Ascending aorta (tissue), 2 donors: ENCODE measurements at regions of chr7 and their contacts with region 1.

Region 1: DNA sequence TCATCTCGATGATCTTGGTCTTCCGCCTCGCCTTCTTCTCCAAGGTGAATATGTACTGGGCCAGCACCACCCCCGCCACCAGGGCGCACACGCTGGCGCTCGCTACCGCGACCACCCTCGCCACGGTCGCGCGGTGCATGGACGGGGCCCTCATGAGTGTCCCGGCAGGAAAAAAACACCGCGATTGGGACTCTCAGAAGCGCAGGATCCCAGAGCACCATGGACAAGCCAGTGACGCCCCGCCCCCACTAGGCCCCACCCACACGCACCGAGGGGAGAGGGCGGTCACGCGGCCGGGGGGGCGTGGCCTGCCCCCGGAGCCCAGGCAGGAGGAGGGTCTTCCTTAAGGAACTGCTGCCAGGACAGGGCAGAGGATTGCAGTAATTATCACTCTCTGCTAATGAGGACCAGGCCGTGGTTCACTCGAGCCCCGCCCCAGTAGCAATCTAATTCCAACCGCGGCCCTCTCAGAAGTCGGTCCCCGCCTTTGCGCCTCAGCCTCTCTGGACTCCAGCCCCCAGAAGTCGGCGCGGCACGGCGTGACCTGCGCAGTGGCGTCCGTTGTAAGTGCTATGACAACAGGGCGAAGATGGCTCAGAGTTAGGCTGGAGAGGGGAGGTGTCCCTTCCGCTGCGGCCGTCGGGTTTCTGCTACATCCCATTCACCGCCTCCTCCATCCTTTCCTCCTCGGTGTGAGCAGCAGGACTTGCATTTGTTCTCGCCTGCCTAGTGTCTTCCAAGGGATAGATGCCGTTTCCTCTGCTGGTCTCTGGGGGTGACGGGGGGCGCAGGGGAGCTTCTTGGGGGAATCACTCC is at the start of gene BBS9:
- DNase-seq: peak; percentile 73 to 96
- H3K4me3 ChIP-seq: peak within 1 kb of the TSS; percentile 84 to 96
- H3K27ac ChIP-seq: peak within 1 kb of the TSS; percentile 30 to 77
- H3K4me1 ChIP-seq: peaks cover 0 to 8% of the 10 kb centered on the region in 2 donors
- H3K27me3 ChIP-seq: no peaks in the 10 kb centered on the region
- CTCF ChIP-seq: no peak
- total RNA-seq, gene BBS9: 23.3 TPM

Region 2: GRCh38 chr7:32495298-32496176 is 633.7 kb before region 1 on chr7 and contains the start of gene AVL9:
- intact Hi-C with region 1: loop called (anchors 1 kb)
- DNase-seq: peak; percentile 96 to 99
- H3K4me3 ChIP-seq: peak within 1 kb of the TSS; percentile 82 to 97
- H3K27ac ChIP-seq: peak within 1 kb of the TSS; percentile 98 to 99
- H3K4me1 ChIP-seq: peaks cover 7 to 13% of the 10 kb centered on the region in 2 donors
- H3K27me3 ChIP-seq: no peaks in the 10 kb centered on the region
- CTCF ChIP-seq: no peak
- total RNA-seq, gene AVL9: 78.3 TPM

Region 3: DNA sequence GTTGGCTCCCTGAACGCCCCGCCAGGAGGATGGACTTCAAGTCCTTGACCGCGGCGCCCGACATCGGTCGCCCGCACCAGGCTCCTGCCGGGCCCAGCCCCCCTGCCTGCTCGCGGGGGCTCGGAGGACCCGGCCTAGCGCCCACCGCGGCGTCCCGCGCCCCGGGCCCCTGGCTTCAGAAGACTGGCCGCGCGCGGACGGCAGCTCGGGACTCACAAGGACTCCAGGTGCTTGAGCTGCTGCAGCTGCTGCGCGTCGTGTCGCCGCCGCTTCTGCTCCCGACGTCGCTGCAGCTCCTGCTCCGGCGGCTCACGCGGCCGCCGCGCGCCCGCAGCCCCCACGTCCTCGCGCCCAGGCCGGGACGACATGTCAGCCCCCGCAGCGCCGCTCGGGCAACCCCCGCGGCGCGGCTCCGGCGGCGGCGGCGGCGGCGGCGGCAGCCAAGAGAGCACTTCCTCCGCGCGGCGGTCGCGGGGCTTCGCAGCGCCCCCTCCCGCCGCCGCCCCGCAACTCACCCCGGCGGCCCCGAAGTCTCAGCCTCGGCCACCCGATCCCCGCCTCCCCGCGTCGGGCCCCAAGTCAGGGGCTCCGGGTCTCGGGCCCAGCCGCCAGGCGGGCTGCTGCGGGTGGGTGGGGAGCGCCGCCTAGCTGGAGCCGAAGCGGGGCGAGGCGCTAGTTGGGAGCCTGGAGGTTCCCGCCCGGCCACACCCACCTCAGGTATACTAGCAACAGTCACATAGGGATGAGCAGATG is 20.0 kb before region 1 on chr7 and contains the start of gene RP9:
- intact Hi-C with region 1: loop called (anchors 1 kb)
- DNase-seq: peak in 1 of 2 donors; percentile 75
- H3K4me3 ChIP-seq: peak within 1 kb of the TSS; percentile 96 to 100
- H3K27ac ChIP-seq: peak within 1 kb of the TSS in 1 of 2 donors; percentile 81
- H3K4me1 ChIP-seq: peaks cover 10 to 14% of the 10 kb centered on the region in 2 donors
- H3K27me3 ChIP-seq: no peaks in the 10 kb centered on the region
- CTCF ChIP-seq: peak; percentile 41 to 75 (median 57)
- total RNA-seq, gene RP9: 2.8 TPM

Region 4: DNA sequence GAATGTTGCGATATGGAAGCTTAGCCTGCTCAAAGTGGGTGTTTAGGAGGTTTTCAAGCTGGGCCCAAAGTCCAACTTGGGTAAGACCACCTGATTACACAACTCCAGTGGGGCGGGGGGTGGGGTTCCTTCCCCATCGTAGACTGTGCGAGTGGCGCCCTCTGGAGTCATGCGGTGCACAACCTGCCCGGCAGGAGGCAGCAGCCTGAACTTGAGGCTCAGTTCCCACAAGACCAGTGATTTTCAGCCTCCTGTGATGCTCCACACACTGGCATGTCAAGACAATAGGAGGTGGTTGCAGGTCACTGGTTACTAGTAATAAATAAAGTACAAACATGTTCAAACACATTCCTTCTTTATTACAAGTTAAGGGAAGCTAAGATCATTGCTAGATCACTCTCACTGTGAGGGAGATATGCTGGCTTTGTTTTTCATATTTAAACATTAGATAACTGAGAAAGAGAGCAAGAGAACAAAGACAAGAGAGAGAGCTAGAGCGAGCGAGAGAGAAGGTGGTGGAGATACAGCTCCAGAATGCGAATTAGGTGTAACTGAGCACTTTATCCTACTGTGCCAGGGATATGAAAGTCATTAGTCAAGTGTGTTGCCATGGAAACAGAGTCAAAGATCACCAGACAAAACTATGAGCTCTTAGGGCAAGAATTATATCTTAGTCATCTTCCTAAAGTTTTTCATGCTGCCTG is 678.7 kb after region 1 on chr7:
- intact Hi-C with region 1: loop called (anchors 5 kb)
- DNase-seq: no peak
- H3K4me3 ChIP-seq: no peak overlapping the region
- H3K27ac ChIP-seq: peak overlapping the region in 1 of 2 donors; percentile 51
- H3K4me1 ChIP-seq: peaks cover 0 to 16% of the 10 kb centered on the region in 2 donors
- H3K27me3 ChIP-seq: no peaks in the 10 kb centered on the region
- CTCF ChIP-seq: peak in 1 of 3 experiments; percentile 8